Left cardiac atrium (tissue), 4 donors: ENCODE measurements at regions of chr14 and their contacts with region 1.

Region 1: GRCh38 chr14:90060312-90060964 is 1.4 kb upstream of the KCNK13 start:
- DNase-seq: peak; percentile 53
- ATAC-seq: peak; percentile 91 to 93

Region 2: DNA sequence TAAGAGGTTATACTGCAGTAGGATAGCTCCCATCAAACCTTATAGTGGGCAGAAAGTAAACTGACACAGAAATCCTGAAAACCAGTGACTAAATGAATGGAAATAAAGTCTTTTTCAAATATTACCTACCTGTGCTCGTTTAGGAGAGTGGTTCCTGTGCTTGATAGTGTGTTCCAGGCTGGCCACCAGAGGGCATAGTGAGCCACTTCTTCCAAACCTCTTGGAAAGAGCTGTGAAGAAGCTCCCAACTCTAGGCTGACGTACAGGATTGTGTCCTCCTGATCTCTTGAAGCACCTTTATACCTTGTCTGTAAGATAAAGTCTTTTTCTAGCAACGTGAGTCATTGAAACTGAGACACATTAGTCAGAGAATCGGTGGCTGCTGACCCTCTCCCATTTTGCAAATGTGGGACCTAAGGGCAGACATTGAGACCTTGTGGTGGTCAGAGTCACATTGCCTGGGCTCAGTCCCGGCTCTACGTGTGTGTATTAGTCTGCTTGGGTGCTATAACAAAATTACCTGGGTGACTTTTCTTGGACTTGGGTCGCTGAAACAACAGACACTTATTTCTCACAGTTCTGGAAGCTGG is 87.1 kb before region 1 on chr14:
- intact Hi-C with region 1: loop called in 1 of 2 experiments (anchors 5 kb)
- DNase-seq: peak; percentile 68
- ATAC-seq: peak; percentile 87 to 91

Region 3: GRCh38 chr14:90039253-90040010 is 21.0 kb before region 1 on chr14:
- intact Hi-C with region 1: no loop called
- DNase-seq: no peak
- ATAC-seq: no peak

Region 4: GRCh38 chr14:90179809-90180779 is 119.7 kb after region 1 on chr14:
- intact Hi-C with region 1: loop called in 1 of 2 experiments (anchors 10 kb)
- DNase-seq: no peak
- ATAC-seq: peak; percentile 79 to 84

Region 5: DNA sequence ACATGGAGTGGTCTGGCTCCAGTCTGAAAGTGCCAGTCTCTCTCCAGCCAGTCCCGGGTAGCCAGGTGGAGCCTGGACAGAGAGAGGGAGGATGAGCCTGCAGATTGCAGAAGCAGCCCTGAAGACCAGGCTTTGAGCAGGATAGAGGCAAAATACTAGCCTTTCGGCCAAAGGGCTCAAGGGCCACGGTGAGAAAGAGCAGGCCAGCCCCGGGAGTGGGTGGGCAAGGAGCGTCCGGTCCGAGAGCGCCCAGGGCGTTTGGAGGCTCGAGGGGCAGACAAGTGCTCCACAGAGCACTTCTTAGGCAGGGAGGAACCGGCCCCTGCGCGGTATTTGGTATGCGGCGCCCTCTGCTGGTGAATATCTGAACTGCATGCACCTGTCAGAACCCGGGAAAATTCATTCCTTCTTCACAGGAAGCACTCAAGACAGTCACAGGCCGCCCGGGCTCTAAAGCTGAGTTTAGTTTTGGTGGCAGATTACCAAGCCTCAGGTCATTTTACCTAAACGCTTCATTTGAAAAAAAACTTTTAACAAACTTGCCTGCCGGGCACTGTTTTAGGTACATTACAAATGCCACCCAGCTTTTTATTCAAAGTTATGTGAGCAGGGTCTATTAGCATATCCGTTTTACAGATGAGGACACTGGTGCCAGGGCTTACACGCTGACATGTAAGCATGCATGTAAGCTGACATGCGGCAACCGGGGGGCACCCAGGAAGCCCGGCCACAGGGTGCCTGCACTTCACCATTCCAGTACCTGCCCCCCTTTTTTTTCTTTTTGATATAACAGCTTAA is 174.9 kb after region 1 on chr14:
- intact Hi-C with region 1: loop called in 1 of 2 experiments (anchors 10 kb)
- DNase-seq: peak; percentile 59
- ATAC-seq: peak; percentile 83 to 88